Sigmoid colon (tissue), 7 donors: ENCODE measurements at regions of chr6 and their contacts with region 1.

Region 1: DNA sequence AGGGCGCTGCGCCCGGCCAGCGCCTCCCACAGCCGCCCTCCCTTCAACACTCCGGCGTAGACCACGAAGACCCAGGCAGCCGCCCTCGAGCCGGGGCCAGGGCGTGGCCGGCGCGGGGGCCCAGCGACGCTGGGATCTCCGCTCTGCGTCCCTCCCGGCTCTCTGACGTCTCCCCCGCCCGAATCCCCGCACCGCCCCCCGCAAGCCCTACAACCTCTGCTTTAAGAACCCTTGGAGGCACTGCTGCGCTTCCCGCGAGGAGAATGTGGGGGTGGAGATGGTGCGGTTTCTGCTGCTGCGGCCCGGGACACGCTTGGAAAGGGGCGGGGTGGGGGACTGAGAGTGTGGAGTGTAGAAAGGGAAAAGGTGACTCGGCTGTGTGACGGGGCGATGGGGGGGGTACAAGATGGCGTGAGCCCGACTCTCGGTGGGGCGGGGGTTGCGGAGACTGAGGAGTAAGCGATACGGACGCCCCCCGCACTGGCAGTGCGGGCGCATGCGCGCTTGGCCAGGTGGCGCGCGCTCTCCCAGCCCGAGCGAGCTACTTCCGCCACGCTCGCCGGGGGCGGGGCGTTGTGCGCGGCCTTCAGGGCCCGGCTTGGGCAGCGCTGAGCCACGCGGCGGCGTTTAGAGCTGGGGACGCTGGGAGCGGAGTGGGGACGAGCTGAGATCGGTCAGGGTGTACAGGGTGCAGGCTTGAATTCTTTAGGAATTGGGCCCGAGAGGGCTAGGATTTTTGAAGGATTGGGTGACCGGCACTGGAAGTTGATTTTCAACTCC is at the start of gene SUPT3H:
- DNase-seq: peak; percentile 96
- H3K4me3 ChIP-seq: peak within 1 kb of the TSS; percentile 79 to 90 (median 86)
- H3K27ac ChIP-seq: peak within 1 kb of the TSS; percentile 97
- H3K4me1 ChIP-seq: peaks cover 0 to 17% (median 8%) of the 10 kb centered on the region in 4 donors
- H3K27me3 ChIP-seq: no peaks in the 10 kb centered on the region
- CTCF ChIP-seq: peak in 1 of 4 experiments; percentile 8
- EP300 ChIP-seq: no peak
- POLR2A ChIP-seq: peak; percentile 34 to 61
- total RNA-seq, gene SUPT3H: 10.6 to 18.2 (median 13.0) TPM

Region 2: DNA sequence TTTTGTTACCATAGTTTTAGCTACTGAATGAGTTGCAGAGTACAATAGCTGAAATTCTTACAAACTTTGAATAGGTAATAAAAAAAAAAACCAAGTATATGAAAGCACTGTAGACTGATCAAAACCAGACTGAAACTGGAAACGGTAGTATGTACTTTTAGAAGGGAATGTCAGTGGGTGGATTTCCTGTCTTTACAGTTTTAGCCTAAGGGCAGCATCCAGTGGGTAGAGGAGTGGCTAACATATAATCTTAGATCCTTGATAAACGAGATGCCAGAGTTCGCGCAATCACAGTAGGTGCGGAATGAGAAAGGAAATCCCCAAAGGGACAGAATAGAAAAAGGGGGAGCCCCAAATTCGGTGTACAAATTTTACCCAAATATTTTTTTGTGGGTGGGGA is 435.5 kb before region 1 on chr6:
- intact Hi-C with region 1: no loop called
- DNase-seq: no peak
- H3K4me3 ChIP-seq: no peak overlapping the region
- H3K27ac ChIP-seq: no peak overlapping the region
- H3K4me1 ChIP-seq: no peaks in the 10 kb centered on the region
- H3K27me3 ChIP-seq: no peaks in the 10 kb centered on the region
- CTCF ChIP-seq: no peak
- EP300 ChIP-seq: no peak
- POLR2A ChIP-seq: no peak

Region 3: GRCh38 chr6:45714741-45715507 is 337.2 kb after region 1 on chr6:
- intact Hi-C with region 1: loop called (anchors 2 kb)
- DNase-seq: peak; percentile 77
- H3K4me3 ChIP-seq: no peak overlapping the region
- H3K27ac ChIP-seq: peak overlapping the region in 1 of 4 donors; percentile 5
- H3K4me1 ChIP-seq: peaks cover 0 to 16% (median 10%) of the 10 kb centered on the region in 4 donors
- H3K27me3 ChIP-seq: no peaks in the 10 kb centered on the region
- CTCF ChIP-seq: peak; percentile 75 to 80 (median 78)
- EP300 ChIP-seq: no peak
- POLR2A ChIP-seq: no peak